Aorta (tissue), 5 donors: ENCODE measurements at regions of chr3 and their contacts with region 1.

Region 1: GRCh38 chr3:183904833-183905780 is 20.4 kb upstream of the PARL start:
- DNase-seq: peak in 1 of 2 donors; percentile 40
- ATAC-seq: no peak
- H3K4me3 ChIP-seq: no peak overlapping the region
- H3K27ac ChIP-seq: no peak overlapping the region
- H3K4me1 ChIP-seq: no peaks in the 10 kb centered on the region
- H3K27me3 ChIP-seq: no peaks in the 10 kb centered on the region

Region 2: GRCh38 chr3:183435661-183436060 is 469.4 kb before region 1 on chr3:
- intact Hi-C with region 1: no loop called
- DNase-seq: no peak
- ATAC-seq: no peak
- H3K4me3 ChIP-seq: no peak overlapping the region
- H3K27ac ChIP-seq: no peak overlapping the region
- H3K4me1 ChIP-seq: no peaks in the 10 kb centered on the region
- H3K27me3 ChIP-seq: no peaks in the 10 kb centered on the region

Region 3: DNA sequence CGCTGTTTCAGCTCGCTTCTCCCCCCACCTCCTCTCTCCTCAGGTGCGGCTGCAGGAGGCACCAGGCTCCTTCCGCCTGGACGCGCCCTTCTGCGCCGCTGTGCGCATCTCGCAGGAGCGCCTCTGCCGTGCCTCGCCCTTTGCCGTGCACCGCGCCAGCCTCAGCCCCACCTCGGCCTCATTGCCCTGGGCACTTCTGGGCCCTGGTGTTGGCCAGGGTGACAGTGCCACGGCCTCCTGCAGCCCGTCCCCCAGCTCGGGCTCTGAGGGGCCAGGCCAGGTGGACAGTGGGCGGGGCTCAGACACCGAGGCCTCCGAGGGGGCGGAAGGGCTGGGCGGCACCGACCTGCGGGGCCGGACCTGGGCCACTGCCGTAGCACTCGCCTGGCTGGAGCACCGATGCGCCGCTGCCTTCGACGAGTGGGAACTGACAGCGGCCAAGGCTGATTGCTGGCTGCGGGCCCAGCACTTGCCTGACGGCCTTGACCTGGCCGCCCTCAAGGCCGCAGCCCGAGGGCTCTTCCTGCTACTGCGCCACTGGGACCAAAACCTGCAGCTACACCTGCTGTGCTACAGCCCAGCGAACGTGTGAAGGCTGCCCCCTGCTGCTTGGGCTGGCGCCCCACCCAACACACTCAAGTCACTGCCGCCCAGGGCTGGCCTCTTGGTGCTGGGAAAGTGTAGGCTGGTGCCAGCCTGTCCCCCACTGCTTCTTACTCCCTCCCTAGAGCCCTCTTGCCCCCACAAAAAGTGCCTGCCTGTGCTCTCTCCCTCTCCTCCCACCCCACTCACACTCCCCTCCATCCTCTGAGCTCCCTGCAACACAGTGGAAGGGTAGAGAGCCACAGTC is 336.6 kb after region 1 on chr3:
- intact Hi-C with region 1: loop called in 1 of 2 experiments (anchors 5 kb)
- DNase-seq: peak in 1 of 2 donors; percentile 34
- ATAC-seq: peak; percentile 66
- H3K4me3 ChIP-seq: no peak overlapping the region
- H3K27ac ChIP-seq: no peak overlapping the region
- H3K4me1 ChIP-seq: no peaks in the 10 kb centered on the region
- H3K27me3 ChIP-seq: no peaks in the 10 kb centered on the region